HEK293 (cell line): ENCODE measurements at regions of chr1 and their contacts with region 1.

Region 1: GRCh38 chr1:234212764-234213657 is 160.2 kb upstream of the COA6 start:
- H3K4me3 ChIP-seq: no peak overlapping the region
- H3K27ac ChIP-seq: no peak overlapping the region
- H3K4me1 ChIP-seq: no peaks in the 10 kb centered on the region
- CTCF ChIP-seq: peak; percentile 50

Region 2: GRCh38 chr1:233951804-233952203 is 261.2 kb before region 1 on chr1:
- CTCF ChIA-PET with region 1: no interaction called
- POLR2A ChIA-PET with region 1: no interaction called
- H3K4me3 ChIP-seq: no peak overlapping the region
- H3K27ac ChIP-seq: no peak overlapping the region
- H3K4me1 ChIP-seq: no peaks in the 10 kb centered on the region
- CTCF ChIP-seq: no peak

Region 3: DNA sequence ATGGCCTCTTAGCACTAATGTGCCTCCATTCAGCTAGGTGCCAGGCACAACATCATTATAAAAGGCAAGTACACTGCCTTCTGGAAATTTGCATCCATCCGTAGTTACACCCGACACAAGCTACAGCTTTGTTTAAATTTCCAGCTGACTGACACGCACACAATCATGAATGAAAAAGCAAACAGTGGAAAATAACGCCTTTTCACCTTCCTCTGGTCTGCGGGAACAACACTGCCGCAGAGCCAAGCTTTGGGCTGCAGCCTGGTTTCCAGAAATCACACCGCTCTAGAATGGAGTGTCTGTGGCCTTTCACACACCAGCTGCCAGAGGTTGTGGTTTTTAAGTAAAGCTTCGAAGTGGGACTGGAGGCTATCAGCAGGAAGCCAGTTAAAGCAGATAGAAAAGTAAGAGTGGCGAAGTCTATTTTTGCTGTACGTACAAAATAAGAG is 17.4 kb after region 1 on chr1:
- CTCF ChIA-PET with region 1: interaction called, 16 read pairs
- POLR2A ChIA-PET with region 1: no interaction called
- H3K4me3 ChIP-seq: no peak overlapping the region
- H3K27ac ChIP-seq: no peak overlapping the region
- H3K4me1 ChIP-seq: no peaks in the 10 kb centered on the region
- CTCF ChIP-seq: no peak

Region 4: GRCh38 chr1:234271243-234271606 is 58.2 kb after region 1 on chr1:
- CTCF ChIA-PET with region 1: no interaction called
- POLR2A ChIA-PET with region 1: no interaction called
- H3K4me3 ChIP-seq: no peak overlapping the region
- H3K27ac ChIP-seq: no peak overlapping the region
- H3K4me1 ChIP-seq: no peaks in the 10 kb centered on the region
- CTCF ChIP-seq: no peak

Region 5: DNA sequence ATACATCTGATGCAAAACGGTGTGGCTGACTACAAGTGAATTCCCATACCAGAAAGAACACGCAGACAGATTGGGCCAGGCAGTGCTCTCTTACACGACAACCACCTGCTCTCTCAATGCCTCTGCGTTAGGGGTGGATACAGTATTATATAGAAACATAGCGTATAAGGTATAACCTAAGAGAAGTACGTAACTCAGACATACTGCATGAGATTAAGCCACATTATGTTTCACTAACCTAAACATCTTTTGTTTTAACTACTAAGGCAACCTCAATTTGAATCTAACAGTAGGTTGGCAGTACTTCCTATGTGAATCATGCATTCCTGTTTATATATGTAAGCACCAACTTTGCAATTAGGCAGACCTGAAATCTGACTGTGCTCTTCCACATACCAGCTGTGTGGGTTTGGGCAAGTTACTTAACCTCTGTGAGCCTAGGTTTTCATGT is 102.1 kb after region 1 on chr1:
- CTCF ChIA-PET with region 1: interaction called, 76 read pairs
- POLR2A ChIA-PET with region 1: no interaction called
- H3K4me3 ChIP-seq: no peak overlapping the region
- H3K27ac ChIP-seq: no peak overlapping the region
- H3K4me1 ChIP-seq: no peaks in the 10 kb centered on the region
- CTCF ChIP-seq: no peak